OCI-LY7 (cell line): ENCODE measurements at regions of chr2 and their contacts with region 1.

Region 1: GRCh38 chr2:73212448-73213176 is 1.4 kb upstream of the SMYD5 start:
- DNase-seq: peak; percentile 79
- H3K4me3 ChIP-seq: no peak overlapping the region
- H3K27ac ChIP-seq: no peak overlapping the region
- H3K4me1 ChIP-seq: peaks cover 25% of the 10 kb centered on the region
- CTCF ChIP-seq: peak; percentile 94

Region 2: GRCh38 chr2:72999729-73000725 is 212.6 kb before region 1 on chr2:
- CTCF ChIA-PET with region 1: no interaction called
- POLR2A ChIA-PET with region 1: interaction called, 11 read pairs
- intact Hi-C with region 1: no loop called
- DNase-seq: no peak
- H3K4me3 ChIP-seq: no peak overlapping the region
- H3K27ac ChIP-seq: no peak overlapping the region
- H3K4me1 ChIP-seq: no peaks in the 10 kb centered on the region
- CTCF ChIP-seq: no peak

Region 3: DNA sequence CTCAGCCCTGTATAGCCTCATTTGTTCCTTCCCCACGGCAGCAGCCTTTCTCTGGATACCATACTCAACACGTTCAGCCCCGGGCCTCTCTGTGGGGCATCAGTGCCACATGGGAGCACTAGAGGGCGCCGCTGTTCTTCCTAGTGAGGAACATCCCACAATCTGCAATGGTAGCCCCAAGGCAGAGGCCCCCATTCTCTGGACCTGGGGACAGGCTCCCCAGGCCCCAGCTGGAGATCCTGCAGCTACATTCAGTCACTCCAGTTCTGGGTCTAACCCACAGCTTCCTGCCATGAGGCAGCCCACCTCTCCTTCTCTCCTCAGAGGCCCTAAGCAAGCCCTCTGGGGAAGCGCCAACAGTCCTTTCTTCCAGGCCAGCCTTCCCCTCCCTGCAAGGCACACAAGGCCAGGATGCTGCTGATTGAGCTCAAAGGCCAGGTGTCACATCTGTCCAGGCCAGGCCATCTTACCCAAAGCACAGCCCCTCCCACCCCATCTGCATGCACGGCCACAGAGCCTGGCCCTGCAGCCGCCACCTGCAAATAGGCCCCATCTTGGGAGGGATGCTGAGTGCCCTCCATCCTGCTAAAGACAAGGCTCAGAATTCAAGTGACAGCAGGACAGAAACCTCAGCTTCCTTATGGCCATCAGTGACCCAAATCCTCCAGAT is 126.8 kb before region 1 on chr2:
- CTCF ChIA-PET with region 1: interaction called, 3 read pairs
- POLR2A ChIA-PET with region 1: no interaction called
- intact Hi-C with region 1: loop called (anchors 1 kb)
- DNase-seq: peak; percentile 76
- H3K4me3 ChIP-seq: no peak overlapping the region
- H3K27ac ChIP-seq: no peak overlapping the region
- H3K4me1 ChIP-seq: no peaks in the 10 kb centered on the region
- CTCF ChIP-seq: peak; percentile 90

Region 4: DNA sequence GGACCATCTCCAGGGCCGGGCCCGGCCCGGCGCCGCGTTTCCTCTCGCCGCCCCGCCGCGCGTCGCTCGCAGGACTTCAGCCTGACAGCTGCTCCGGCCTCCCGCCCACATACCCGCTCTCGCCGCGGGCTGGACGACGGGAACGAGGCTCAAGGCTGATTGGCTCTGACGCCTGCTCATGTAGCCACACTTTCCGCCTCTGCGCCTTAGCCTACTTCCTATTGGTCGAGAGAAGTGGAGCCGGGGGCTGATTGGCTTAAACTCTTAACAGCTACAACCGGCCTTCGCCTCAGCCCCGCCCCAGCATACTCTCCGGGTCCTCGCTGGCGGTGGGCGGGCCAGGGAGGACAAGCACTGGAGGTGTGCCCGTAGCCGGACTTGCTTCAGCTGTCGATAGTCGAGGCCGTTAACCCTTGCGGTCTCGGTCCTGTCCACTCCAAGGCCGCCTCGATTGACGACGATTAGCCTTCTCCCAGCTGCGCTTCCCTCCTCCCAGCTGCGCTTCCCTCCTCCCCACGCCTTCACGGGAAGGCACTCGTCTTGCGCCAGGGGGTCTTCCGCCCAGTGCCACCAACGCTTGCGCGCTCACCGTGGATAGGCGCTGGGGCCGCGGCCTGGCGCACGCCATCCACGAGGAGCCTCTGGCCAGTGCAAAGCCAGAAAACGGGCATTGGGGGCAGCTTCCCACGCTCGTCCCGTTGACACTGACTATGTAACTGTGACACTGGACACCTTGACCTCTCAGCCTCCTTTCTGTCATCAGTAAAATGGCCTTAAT is 20.7 kb after region 1 on chr2 and contains the start of gene PRADC1:
- CTCF ChIA-PET with region 1: interaction called, 5 read pairs
- POLR2A ChIA-PET with region 1: interaction called, 5 read pairs
- intact Hi-C with region 1: loop called (anchors 1 kb)
- DNase-seq: peak; percentile 99
- H3K4me3 ChIP-seq: peak within 1 kb of the TSS; percentile 93
- H3K27ac ChIP-seq: peak within 1 kb of the TSS; percentile 78
- H3K4me1 ChIP-seq: peaks cover 27% of the 10 kb centered on the region
- CTCF ChIP-seq: no peak
- total RNA-seq, gene PRADC1: 25.3 and 25.9 TPM in 2 replicates

Region 5: DNA sequence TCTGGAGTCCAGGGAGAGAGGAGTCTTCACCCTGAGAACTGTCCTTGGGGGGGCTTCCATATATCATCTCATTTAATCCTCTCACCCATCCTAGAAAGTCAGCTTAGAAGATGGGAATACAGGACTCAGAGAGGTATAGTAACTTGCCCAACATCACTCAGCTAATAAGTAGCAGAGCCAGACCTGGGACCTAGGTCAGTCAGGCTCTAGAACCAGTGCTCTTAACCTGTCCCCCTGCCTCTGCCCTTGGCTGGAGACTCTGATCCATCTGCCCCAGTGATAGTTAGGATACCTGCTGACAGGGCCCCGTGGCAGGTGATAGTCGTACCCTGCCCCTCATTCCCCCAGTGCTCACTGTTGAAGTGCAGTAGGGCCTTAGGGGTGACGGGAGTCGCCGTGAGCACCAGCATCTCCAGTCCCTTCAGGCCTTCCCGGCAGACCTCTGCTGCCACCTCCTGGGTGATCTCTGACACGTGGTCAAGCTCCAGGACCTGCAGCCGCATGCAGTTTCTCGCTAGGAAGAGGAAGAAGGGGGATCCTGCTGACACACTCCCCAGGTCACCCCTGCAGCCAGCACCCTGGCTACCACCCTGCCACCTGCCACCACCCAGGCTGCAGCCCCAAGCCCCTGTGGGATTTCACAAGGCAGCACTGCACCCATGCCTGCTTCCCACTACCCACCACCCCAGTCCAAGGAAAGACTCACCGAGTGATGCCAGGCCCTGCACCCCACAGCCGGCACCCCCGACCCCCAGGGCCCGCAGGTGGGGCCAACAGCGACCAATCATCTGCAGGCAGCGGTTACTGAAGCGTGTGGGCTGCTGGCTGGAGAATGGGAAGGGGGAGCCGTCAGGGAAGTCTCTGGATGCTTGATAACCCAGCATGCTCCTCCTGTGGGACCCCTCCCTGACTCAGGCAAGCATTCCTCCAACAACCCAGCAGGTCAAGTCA is 47.7 kb after region 1 on chr2:
- CTCF ChIA-PET with region 1: no interaction called
- POLR2A ChIA-PET with region 1: interaction called, 3 read pairs
- intact Hi-C with region 1: loop called (anchors 2 kb)
- DNase-seq: peak; percentile 48
- H3K4me3 ChIP-seq: no peak overlapping the region
- H3K27ac ChIP-seq: no peak overlapping the region
- H3K4me1 ChIP-seq: no peaks in the 10 kb centered on the region
- CTCF ChIP-seq: peak; percentile 60